Activated T-helper 2 cell treated with anti-CD3 and anti-CD28 coated beads, Interferon-gamma antibody, Interleukin-2, Interleukin-4, amounts not matched to agents 10 μg/mL and 5 μg/mL and 100 μg/mL, durations not matched to agents 14 hours and 24 hours and 36 hours (primary cell): ENCODE measurements at regions of chr3 and their contacts with region 1.

Region 1: GRCh38 chr3:124995460-124995994 is 60.3 kb downstream of the HEG1 start:
- DNase-seq: peak; percentile 25
- H3K4me3 Mint-ChIP-seq: no peak overlapping the region
- H3K27ac Mint-ChIP-seq: no peak overlapping the region
- H3K4me1 Mint-ChIP-seq: no peaks in the 10 kb centered on the region
- H3K27me3 Mint-ChIP-seq: no peaks in the 10 kb centered on the region

Region 2: DNA sequence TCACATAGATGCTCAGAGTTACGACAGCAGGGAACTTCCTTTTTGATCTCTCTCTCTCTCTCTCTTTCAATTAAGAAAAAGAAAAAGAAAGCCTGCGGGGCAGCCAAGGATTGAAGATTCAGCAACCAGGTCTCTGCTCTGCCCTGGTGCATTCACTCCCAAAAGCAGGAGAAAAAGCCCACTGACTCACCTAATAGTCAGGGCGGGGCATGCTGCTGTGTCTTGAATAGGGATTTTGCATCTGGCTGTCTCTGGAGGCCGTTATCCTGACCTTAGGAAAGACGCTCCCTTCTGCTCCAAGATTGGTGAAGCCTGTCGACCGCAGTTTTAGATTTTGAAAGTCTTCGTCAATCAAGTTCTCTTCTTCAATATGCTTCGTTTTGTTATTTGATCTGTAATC is 87.6 kb before region 1 on chr3:
- intact Hi-C with region 1: no loop called
- DNase-seq: no peak
- H3K4me3 Mint-ChIP-seq: no peak overlapping the region
- H3K27ac Mint-ChIP-seq: no peak overlapping the region
- H3K4me1 Mint-ChIP-seq: no peaks in the 10 kb centered on the region
- H3K27me3 Mint-ChIP-seq: peaks cover 21% of the 10 kb centered on the region

Region 3: DNA sequence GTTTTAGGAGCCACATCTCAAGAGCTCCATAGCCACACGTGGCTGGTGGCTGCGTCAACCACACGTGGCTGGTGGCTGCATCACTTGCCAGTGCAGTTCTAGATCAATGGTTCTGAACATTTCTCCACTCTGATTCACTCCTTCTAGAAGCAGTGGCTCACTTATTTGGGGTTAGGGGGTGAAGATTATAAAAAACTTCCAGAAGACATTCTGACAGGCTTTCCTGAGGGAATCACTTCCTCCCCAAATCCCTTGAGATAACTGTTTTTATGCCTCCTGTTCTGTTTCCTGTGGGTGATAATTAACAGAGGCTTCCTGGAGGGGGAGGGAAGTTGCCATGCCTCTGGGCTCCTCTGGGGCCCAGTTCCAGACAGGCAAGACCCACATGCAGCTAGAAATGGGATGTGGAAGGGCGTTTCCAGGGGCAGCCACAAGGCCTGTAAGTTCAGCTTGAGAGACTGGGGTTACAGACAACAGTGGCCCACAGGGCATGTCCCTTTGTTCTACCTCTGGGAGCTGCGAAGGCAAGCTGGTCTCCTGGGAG is 36.6 kb after region 1 on chr3:
- intact Hi-C with region 1: no loop called
- DNase-seq: no peak
- H3K4me3 Mint-ChIP-seq: no peak overlapping the region
- H3K27ac Mint-ChIP-seq: no peak overlapping the region
- H3K4me1 Mint-ChIP-seq: peaks cover 32% of the 10 kb centered on the region
- H3K27me3 Mint-ChIP-seq: no peaks in the 10 kb centered on the region

Region 4: DNA sequence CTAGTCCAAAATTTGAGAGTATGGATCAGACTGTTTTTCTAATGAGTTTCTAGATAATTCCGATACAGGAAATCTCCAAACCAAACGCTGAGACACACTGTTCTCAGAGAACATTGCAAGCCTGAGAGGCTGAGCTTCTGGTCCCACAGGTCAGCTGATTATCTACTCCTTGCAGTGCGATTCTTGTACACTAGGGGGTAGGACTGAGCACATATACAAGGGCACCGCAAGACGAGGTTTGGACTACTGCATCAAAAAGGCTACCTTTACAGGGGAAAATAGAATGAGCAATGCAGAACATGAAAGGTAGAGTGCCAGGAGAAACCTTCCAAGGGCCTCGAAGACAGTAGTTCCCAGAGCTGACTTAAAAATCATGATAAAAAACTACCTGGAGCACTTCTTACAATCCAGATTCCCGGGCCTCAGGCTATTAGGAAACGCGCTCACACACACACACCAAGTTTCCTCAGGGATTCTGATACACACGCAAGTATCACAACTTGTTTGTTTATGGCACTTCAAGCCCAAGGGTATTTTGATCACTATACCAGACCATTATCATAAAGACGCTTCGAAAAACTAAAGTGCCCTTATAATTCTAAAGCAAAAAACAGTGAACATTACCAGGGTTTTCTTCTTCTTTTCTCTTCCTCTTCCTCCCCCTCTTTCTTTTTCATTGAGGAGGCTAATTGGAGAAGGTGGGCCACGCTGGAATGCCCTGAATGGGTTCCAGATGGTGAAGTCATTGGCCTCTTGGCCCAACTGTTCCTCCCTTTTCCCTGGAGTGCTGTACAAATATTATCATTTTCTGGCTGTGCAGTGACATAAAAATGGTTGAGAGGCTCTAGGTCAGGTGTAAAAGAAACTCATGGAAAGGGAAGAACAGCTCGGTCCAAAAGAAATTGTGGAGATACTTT is 155.3 kb after region 1 on chr3:
- intact Hi-C with region 1: loop called (anchors 5 kb)
- DNase-seq: peak; percentile 52
- H3K4me3 Mint-ChIP-seq: no peak overlapping the region
- H3K27ac Mint-ChIP-seq: no peak overlapping the region
- H3K4me1 Mint-ChIP-seq: peaks cover 22% of the 10 kb centered on the region
- H3K27me3 Mint-ChIP-seq: peaks cover 38% of the 10 kb centered on the region

Region 5: DNA sequence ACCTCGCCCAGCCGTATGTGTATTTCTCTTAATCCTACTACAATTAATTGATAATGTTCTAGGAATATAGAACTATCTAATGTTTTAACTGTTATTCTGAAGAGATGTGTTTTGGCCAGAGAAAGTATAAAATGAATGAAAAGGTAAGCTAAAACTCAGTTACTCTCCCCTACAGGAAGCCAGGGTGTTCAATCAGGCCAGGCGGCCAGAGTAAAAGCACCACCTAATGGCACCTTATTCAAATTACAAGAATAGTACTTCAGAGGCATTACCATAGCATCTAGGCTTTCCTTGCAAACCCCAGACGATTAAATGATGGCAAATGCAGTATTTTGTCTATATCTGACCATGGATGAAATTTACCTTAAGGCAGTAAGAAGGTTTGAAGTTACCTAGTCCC is 206.7 kb after region 1 on chr3:
- intact Hi-C with region 1: loop called (anchors 5 kb)
- DNase-seq: no peak
- H3K4me3 Mint-ChIP-seq: no peak overlapping the region
- H3K27ac Mint-ChIP-seq: no peak overlapping the region
- H3K4me1 Mint-ChIP-seq: no peaks in the 10 kb centered on the region
- H3K27me3 Mint-ChIP-seq: peaks cover 46% of the 10 kb centered on the region